Activated B cell treated with CpG ODN at 0.5 μM for 24 hours (primary cell): ENCODE measurements at regions of chr2 and their contacts with region 1.

Region 1: DNA sequence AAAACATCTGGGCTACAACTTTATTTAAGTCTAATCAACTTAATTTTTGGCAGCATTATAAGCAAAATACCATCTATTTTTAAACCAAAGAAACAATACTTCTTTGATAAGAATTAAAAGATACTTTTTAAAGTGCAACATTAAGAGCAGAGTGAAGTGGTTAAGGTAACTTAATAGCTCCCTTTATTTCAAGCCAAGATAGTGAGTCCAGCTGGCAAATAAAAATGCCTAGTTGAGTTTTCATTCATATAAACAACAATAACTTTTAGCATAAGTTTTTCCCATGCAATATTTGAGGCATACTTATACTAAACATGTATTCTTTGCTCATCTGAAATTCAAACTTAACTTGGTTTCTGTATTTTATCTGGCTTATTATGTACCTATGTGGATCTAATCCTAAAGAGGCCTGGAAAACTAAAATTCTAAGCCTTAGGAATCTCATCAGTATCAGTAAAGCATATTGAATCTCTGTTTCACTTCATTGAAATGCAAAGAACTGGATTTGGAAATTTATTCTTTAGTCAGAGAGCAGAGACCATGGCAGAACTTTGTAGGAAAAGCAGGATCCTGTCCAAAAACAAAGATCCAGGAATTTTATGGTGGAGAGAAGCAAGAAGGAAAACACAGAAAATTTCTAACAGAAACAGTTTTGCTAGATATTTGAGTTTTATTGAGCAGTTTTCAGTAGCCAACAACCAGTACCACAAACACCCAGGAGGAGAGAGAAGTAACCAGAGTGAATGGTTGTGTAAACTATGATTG is 95.9 kb downstream of the COL3A1 start:
- DNase-seq: no peak
- ATAC-seq: no peak
- H3K4me3 Mint-ChIP-seq: no peak overlapping the region
- H3K27ac Mint-ChIP-seq: no peak overlapping the region
- H3K4me1 Mint-ChIP-seq: peaks cover 5% of the 10 kb centered on the region
- H3K27me3 Mint-ChIP-seq: no peaks in the 10 kb centered on the region
- CTCF ChIP-seq: no peak

Region 2: DNA sequence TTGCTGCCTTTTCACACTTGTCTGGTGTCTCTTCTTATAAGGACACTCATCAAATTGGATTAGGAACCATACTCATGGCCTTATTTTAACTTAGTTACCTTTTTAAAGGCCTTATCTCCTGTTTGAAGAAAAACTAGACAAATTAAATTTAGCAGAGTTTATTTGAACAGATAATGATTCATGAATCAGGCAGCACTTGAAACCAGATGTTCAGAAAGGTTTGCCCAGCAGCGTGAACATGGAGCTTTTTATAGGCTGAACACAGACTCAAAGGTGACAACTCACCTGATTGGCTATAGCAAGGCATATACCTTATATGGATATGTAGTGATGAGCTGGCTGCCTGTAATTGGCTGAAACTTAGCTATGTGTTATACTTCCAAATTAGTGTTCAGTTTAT is 540.3 kb before region 1 on chr2:
- CTCF ChIA-PET with region 1: no interaction called
- POLR2A ChIA-PET with region 1: no interaction called
- intact Hi-C with region 1: no loop called
- DNase-seq: no peak
- ATAC-seq: no peak
- H3K4me3 Mint-ChIP-seq: no peak overlapping the region
- H3K27ac Mint-ChIP-seq: no peak overlapping the region
- H3K4me1 Mint-ChIP-seq: no peaks in the 10 kb centered on the region
- H3K27me3 Mint-ChIP-seq: no peaks in the 10 kb centered on the region
- CTCF ChIP-seq: no peak

Region 3: GRCh38 chr2:189056200-189057106 is 13.6 kb before region 1 on chr2:
- CTCF ChIA-PET with region 1: no interaction called
- POLR2A ChIA-PET with region 1: no interaction called
- intact Hi-C with region 1: loop called (anchors 2 kb)
- DNase-seq: no peak
- ATAC-seq: no peak
- H3K4me3 Mint-ChIP-seq: no peak overlapping the region
- H3K27ac Mint-ChIP-seq: no peak overlapping the region
- H3K4me1 Mint-ChIP-seq: no peaks in the 10 kb centered on the region
- H3K27me3 Mint-ChIP-seq: no peaks in the 10 kb centered on the region
- CTCF ChIP-seq: no peak